ENCODE measurements at regions of chr7 and their contacts with region 1.

Region 1: DNA sequence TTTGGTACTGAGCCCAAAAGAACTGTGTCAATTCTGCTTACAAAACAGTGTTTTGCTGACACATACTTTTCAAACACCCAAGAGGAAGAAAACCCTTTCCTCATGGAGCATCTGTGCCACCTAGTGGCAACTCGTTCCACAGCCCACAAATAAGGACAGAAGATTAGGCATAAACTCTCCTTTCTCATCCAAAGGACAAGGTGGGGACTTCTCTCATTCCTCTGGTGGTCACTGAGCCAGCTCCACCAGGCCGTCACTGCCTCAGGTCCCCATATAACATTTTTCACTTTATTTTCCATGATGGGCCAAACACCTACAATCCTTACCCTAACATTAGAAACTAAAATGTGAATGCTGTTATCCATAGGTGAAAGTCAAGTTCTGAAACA is 76.9 kb downstream of the RNF216 start:
- DNase-seq: peak; percentile 49
- ATAC-seq: peak; percentile 31
- H3K4me3 Mint-ChIP-seq: no peak overlapping the region
- H3K27ac Mint-ChIP-seq: no peak overlapping the region
- H3K4me1 Mint-ChIP-seq: peaks cover 40% of the 10 kb centered on the region
- H3K27me3 Mint-ChIP-seq: no peaks in the 10 kb centered on the region
- CTCF ChIP-seq: peak; percentile 78

Region 2: DNA sequence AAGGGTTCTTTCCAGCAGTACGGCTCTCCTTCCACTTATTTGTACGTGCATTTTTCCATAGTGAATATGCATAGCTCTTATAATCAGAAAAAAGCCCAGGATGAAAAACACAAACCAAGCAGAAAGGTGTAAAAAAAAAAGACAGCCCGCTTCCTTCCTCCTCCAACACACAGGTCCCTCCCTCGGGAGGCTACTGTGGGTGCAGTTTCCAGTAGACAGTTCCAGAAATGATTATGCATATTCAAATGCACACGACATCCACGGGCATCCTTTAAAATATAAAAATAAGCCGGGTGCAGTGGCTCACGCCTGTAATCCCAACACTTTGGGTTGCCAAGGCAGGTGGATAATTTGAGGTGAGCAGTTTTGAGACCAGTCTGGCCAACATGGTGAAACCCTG is 340.8 kb before region 1 on chr7:
- CTCF ChIA-PET with region 1: interaction called, 3 read pairs
- POLR2A ChIA-PET with region 1: no interaction called
- intact Hi-C with region 1: loop called (anchors 1 kb)
- DNase-seq: no peak
- ATAC-seq: no peak
- H3K4me3 Mint-ChIP-seq: no peak overlapping the region
- H3K27ac Mint-ChIP-seq: no peak overlapping the region
- H3K4me1 Mint-ChIP-seq: peaks cover 22% of the 10 kb centered on the region
- H3K27me3 Mint-ChIP-seq: no peaks in the 10 kb centered on the region
- CTCF ChIP-seq: no peak

Region 3: DNA sequence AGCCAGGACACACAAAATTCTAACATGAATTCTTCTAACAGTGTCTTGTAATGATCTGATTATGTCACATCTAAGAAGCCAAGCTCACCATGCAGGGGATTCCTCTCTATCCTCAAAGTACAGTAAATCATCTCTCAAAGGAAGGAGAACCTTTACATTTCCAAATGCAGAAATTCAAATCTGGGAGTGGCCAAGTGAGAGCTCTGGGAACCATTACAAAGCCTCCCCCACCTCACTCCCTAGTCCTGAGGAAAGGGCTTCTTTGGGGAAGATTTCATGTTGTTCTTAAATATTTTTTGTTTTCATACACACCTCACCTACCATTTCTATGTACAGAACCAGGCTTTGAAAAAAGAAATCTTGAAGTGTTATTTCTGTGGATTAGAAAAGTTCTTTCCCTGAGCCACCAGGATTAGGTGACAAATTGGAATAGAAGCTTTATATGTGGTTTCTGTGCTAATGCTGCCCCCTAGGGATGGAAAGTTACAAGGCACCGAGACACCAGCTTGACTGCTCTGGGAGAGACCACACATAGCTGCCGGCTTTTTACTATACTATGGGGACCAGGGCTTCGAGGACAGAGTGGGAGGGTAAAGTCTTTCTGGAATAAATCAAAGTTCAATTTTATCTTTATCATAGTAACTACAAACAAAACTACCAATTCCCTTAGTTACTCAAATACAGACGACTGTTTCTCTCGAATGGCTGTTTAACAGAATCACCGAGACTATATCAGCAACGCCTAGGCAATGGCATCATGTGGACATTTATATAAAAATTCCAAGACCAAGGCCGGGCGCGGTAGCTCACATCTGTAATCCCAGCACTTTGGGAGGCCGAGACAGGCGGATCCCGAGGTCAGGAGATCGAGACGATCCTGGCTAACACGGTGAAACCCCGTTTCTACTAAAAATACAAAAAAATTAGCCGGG is 39.2 kb before region 1 on chr7:
- CTCF ChIA-PET with region 1: interaction called, 54 read pairs
- POLR2A ChIA-PET with region 1: interaction called, 5 read pairs
- intact Hi-C with region 1: loop called (anchors 1 kb)
- DNase-seq: no peak
- ATAC-seq: peak; percentile 71
- H3K4me3 Mint-ChIP-seq: no peak overlapping the region
- H3K27ac Mint-ChIP-seq: no peak overlapping the region
- H3K4me1 Mint-ChIP-seq: peaks cover 28% of the 10 kb centered on the region
- H3K27me3 Mint-ChIP-seq: no peaks in the 10 kb centered on the region
- CTCF ChIP-seq: no peak

Region 4: DNA sequence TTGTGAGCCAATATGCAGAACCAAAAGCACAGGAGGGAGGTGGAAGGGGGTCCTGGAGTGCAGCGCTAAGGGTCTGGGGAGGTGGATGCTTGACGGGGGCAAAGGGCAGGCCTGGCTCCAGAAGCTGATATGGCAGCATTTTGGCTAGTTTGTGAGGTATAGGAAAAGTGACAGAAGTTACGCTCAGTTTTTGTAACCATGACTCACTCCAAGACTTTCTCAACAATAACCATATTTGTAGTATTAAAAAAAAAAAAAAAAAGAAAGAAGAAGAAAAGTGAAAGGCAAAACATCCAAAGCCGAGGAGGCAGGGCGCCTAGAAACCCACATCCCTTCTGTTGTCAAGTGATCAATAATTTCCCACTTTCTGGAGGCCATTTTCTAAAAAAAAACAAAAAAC is 15.4 kb before region 1 on chr7:
- CTCF ChIA-PET with region 1: interaction called, 26 read pairs
- POLR2A ChIA-PET with region 1: interaction called, 38 read pairs
- intact Hi-C with region 1: loop called (anchors 1 kb)
- DNase-seq: no peak
- ATAC-seq: no peak
- H3K4me3 Mint-ChIP-seq: no peak overlapping the region
- H3K27ac Mint-ChIP-seq: peak overlapping the region; percentile 47
- H3K4me1 Mint-ChIP-seq: peaks cover 89% of the 10 kb centered on the region
- H3K27me3 Mint-ChIP-seq: no peaks in the 10 kb centered on the region
- CTCF ChIP-seq: no peak

Measured in activated B cell treated with CpG ODN at 0.5 μM for 24 hours (primary cell).